ENCODE measurements at regions of chr1 and their contacts with region 1.

Region 1: DNA sequence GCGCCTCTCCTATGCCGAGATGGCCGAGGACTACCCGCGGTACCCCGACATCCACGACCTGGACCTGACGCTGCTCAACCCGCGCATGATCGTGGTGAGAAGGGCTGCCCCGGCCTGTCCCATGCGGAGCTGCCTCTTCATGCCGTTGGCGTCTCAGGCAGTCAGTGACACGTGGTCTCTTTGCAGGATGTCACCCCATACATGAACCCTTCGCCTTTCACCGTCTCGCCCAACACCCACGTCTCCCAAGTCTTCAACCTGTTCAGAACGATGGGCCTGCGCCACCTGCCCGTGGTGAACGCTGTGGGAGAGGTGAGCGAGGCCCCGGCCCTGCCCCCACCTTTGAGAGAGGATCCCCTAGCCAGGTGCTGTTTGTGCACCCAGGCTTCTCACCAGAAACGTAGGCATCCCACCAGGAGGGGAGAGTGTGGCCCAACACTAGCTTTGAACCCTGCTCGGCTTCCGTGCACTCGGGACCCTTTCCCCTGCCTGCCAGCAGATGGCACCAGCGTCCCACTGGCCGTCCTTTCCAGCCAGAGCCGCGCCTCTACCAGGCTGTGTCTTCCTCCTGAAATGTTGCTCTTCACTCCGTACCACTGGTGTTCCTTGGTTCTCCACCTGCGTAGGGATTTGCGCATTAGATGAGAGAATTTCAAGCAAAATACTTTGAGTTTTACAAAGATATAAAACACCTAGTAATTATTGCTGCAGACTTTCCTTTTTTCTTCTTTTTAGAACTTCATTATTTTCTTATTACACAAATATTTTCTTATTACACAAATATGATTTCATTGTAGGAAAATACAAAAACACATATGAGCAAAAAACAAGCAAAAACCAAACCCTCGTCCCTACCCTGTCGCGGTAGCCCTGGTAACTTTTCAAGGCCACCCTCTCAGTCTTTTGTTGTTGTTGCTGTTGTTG is 9.0 kb downstream of the NPPA start:
- DNase-seq: no peak
- ATAC-seq: peak; percentile 98
- H3K4me3 ChIP-seq: no peak overlapping the region
- H3K27ac ChIP-seq: no peak overlapping the region
- H3K4me1 ChIP-seq: no peaks in the 10 kb centered on the region
- H3K27me3 ChIP-seq: no peaks in the 10 kb centered on the region
- CTCF ChIP-seq: peak; percentile 95 to 99 (median 97)
- POLR2A ChIP-seq: no peak
- RAD21 ChIP-seq: peak; percentile 99

Region 2: DNA sequence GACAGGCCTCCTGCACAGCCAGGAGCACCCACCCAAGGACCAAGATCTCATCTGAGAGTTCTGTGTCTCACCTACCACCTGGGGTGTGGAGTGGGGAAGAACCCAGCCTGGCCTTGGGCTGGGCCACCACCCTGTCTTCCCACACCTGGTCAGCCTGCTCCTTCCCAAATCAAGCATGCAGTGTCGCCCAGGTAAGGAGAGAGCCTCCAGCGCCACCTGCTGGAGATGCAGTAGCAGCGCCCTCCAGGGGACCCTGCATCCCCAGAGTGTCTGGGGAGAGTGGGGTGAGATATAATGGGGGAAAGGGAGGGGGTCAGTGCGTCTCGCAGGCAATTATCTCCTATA is 55.3 kb after region 1 on chr1:
- CTCF ChIA-PET with region 1: interaction called, 4 read pairs
- POLR2A ChIA-PET with region 1: interaction called, 4 read pairs
- RAD21 ChIA-PET with region 1: no interaction called
- intact Hi-C with region 1: loop called (anchors 1 kb)
- DNase-seq: peak; percentile 34
- ATAC-seq: peak; percentile 99
- H3K4me3 ChIP-seq: no peak overlapping the region
- H3K27ac ChIP-seq: no peak overlapping the region
- H3K4me1 ChIP-seq: peaks cover 3 to 11% of the 10 kb centered on the region in 2 experiments
- H3K27me3 ChIP-seq: no peaks in the 10 kb centered on the region
- CTCF ChIP-seq: peak; percentile 93 to 99 (median 98)
- POLR2A ChIP-seq: no peak
- RAD21 ChIP-seq: peak; percentile 94

Region 3: DNA sequence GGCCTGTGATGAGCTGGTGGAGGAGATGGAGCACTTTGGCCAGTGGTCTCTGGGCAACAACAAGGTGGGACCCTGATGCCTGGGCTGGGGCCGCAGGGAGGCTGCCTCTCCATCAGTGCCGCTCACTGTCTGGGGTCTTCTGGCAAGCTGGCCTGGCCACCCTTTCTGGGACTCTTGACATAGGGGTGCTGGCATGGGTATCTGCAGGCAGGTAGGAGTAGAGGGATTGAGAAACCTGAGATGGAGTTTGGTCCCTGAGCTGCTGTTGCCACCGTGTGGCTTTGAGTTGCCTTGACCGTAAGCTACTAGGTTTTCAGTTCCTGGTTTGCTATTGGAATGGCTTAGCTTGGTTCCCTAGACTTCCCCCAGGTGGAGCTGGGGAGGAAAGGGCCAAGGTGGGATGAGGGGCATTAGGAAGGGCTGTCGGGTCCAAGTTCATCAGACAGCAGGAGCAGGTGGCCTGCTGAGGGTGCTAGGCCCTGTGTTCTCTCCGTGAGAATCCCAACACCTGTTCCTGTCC is 128.5 kb after region 1 on chr1:
- CTCF ChIA-PET with region 1: interaction called, 3 read pairs
- POLR2A ChIA-PET with region 1: no interaction called
- RAD21 ChIA-PET with region 1: no interaction called
- intact Hi-C with region 1: loop called (anchors 1 kb)
- DNase-seq: peak; percentile 54
- ATAC-seq: peak; percentile 87
- H3K4me3 ChIP-seq: no peak overlapping the region
- H3K27ac ChIP-seq: no peak overlapping the region; the same call in 1 of the 2 replicates
- H3K4me1 ChIP-seq: no peaks in the 10 kb centered on the region
- H3K27me3 ChIP-seq: no peaks in the 10 kb centered on the region
- CTCF ChIP-seq: peak; percentile 52 to 59 (median 53); a peak in 5 of 6 replicates
- POLR2A ChIP-seq: no peak
- RAD21 ChIP-seq: peak; percentile 68

Region 4: DNA sequence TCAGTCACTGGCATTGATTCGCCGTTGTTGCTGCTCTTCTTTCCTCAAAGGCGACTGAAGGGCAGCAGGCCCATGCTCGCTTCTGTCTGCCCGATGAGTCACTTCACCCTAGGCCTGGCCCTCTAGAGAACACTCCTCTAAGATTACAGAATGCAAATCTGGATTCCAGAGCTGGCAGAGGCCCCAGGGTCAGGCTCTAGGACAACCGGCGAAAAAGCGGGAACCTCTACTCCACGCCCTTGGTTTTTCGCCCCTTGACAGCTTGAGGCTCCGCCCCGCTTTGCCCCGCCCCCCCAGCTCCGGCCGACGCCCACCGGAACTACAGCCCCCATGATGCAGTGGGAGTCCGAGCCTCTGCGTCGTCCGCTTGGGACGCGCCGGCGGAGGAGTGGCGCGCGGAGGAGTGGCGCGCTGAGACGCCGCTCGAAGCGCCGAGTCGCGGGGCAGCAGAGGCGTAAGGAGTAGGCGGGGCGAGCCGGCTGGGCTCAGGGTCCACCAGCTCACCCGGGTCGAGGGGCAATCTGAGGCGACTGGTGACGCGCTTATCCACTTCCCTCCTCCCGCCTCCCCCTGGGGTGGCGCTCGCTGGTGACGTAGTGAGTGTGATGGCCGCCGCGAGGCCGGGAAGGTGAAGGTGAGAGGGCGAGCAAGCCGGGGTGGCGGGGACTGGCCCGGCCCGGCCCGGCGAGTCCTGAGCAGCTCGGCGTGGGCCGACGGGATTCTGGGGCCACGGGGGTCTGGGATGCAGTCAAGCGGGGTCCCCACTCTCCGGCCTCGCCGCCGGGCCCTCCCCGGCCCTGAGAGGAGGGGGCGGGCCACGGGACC is 141.5 kb after region 1 on chr1 and contains the start of gene MFN2:
- CTCF ChIA-PET with region 1: interaction called, 3 read pairs
- POLR2A ChIA-PET with region 1: no interaction called
- RAD21 ChIA-PET with region 1: no interaction called
- intact Hi-C with region 1: loop called (anchors 1 kb)
- DNase-seq: peak; percentile 94
- ATAC-seq: peak; percentile 94
- H3K4me3 ChIP-seq: peak within 1 kb of the TSS; percentile 73 to 83
- H3K27ac ChIP-seq: peak within 1 kb of the TSS; percentile 89
- H3K4me1 ChIP-seq: peaks cover 21 to 24% of the 10 kb centered on the region in 2 experiments
- H3K27me3 ChIP-seq: no peaks in the 10 kb centered on the region
- CTCF ChIP-seq: no peak
- POLR2A ChIP-seq: peak; percentile 83
- RAD21 ChIP-seq: no peak
- total RNA-seq, gene MFN2: 83.0 TPM

Region 5: GRCh38 chr1:12031039-12031980 is 192.7 kb after region 1 on chr1:
- CTCF ChIA-PET with region 1: no interaction called
- POLR2A ChIA-PET with region 1: no interaction called
- RAD21 ChIA-PET with region 1: no interaction called
- intact Hi-C with region 1: loop called (anchors 1 kb)
- DNase-seq: no peak
- ATAC-seq: peak; percentile 95
- H3K4me3 ChIP-seq: no peak overlapping the region
- H3K27ac ChIP-seq: no peak overlapping the region
- H3K4me1 ChIP-seq: no peaks in the 10 kb centered on the region
- H3K27me3 ChIP-seq: no peaks in the 10 kb centered on the region
- CTCF ChIP-seq: peak; percentile 51 to 81 (median 73); a peak in 5 of 6 replicates
- POLR2A ChIP-seq: no peak
- RAD21 ChIP-seq: peak; percentile 82

Region 6: GRCh38 chr1:12208764-12209494 is 370.3 kb after region 1 on chr1:
- CTCF ChIA-PET with region 1: no interaction called
- POLR2A ChIA-PET with region 1: no interaction called
- RAD21 ChIA-PET with region 1: no interaction called
- intact Hi-C with region 1: loop called (anchors 10 kb)
- DNase-seq: peak; percentile 68
- ATAC-seq: peak; percentile 95
- H3K4me3 ChIP-seq: no peak overlapping the region
- H3K27ac ChIP-seq: no peak overlapping the region
- H3K4me1 ChIP-seq: peaks cover 6 to 9% of the 10 kb centered on the region in 2 experiments; a peak in 3 of 4 replicates
- H3K27me3 ChIP-seq: no peaks in the 10 kb centered on the region
- CTCF ChIP-seq: peak; percentile 81 to 97 (median 91)
- POLR2A ChIP-seq: no peak
- RAD21 ChIP-seq: peak; percentile 99